Tibial artery (tissue), 4 donors: ENCODE measurements at regions of chr16 and their contacts with region 1.

Region 1: DNA sequence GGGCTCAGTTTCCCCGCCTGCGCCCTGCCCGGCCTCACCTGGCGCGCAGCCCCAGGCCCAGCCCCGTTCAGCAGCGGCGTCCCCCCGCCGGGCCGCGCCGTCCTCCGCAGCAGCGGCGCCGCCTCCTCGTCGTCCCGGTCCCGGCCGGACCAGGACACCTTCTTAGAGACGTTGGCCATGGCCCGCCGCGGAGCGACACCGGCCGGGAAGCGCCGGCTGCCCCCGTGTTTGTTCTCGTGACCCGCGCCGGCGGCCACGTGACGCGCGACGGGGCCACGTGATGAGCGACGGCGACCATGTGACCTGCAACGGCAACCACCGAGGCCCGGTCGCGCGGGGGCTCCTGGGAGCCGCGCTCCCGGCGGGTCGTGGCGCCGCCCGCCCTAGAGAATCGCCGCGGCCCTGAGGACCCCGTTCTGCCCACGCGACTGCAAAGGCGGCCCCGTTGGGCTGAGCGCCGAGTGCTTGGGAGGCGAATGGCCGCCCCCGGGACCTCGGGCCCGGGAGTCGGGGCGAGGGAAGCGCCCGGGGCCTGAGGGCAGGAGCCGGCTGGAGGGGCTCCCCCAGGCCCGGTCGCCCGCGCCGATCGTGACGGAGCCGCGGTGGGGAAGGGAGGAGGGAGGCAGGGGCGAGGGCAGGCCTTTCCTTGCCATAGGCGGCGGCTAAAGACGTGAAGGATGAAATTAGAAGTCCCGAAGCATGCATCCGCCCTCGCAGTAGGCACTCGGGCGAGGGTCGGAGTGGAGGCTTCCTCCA is at the start of gene CLCN7:
- DNase-seq: peak; percentile 90 to 94
- H3K4me3 ChIP-seq: peak within 1 kb of the TSS; percentile 79 to 95
- H3K27ac ChIP-seq: peak within 1 kb of the TSS; percentile 85 to 88
- H3K4me1 ChIP-seq: peaks cover 0 to 33% (median 20%) of the 10 kb centered on the region in 4 donors
- H3K27me3 ChIP-seq: no peaks in the 10 kb centered on the region
- CTCF ChIP-seq: no peak

Region 2: GRCh38 chr16:1428511-1428910 is 46.5 kb before region 1 on chr16:
- intact Hi-C with region 1: loop called (anchors 10 kb)
- DNase-seq: no peak
- H3K4me3 ChIP-seq: no peak overlapping the region
- H3K27ac ChIP-seq: no peak overlapping the region
- H3K4me1 ChIP-seq: peaks cover 0 to 9% (median 0%) of the 10 kb centered on the region in 4 donors
- H3K27me3 ChIP-seq: peaks cover 0 to 39% of the 10 kb centered on the region in 2 donors
- CTCF ChIP-seq: no peak